ENCODE measurements at regions of chr22 and their contacts with region 1.

Region 1: GRCh38 chr22:43088979-43089717 is at the start of gene TTLL1:
- DNase-seq: peak; percentile 83
- ATAC-seq: peak; percentile 96
- H3K4me3 Mint-ChIP-seq: peak within 1 kb of the TSS; percentile 88
- H3K27ac Mint-ChIP-seq: peak within 1 kb of the TSS; percentile 56
- H3K4me1 Mint-ChIP-seq: peaks cover 21% of the 10 kb centered on the region
- H3K27me3 Mint-ChIP-seq: no peaks in the 10 kb centered on the region
- CTCF ChIP-seq: no peak
- total RNA-seq, gene TTLL1: 1.2 and 1.5 TPM in 2 replicates

Region 2: DNA sequence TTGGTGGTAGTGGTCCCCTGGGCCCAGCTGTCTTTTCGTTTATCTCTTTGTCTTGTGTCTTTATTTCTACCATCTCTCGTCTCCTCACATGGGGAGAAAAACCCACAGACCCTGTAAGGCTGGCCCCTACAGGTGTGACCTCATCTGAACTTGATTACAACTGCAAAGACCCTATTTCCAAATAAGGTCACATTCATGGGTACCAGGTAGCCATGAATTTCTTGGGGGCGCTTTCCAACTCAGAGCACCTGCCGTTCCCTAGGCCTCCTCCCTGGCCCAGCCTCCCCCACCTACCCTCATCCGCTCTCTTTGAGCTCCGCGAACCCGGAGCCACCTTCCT is 555.5 kb before region 1 on chr22:
- CTCF ChIA-PET with region 1: no interaction called
- POLR2A ChIA-PET with region 1: no interaction called
- intact Hi-C with region 1: loop called (anchors 5 kb)
- DNase-seq: no peak
- ATAC-seq: no peak
- H3K4me3 Mint-ChIP-seq: peak overlapping the region; percentile 81
- H3K27ac Mint-ChIP-seq: peak overlapping the region; percentile 94
- H3K4me1 Mint-ChIP-seq: peaks cover 66% of the 10 kb centered on the region
- H3K27me3 Mint-ChIP-seq: no peaks in the 10 kb centered on the region
- CTCF ChIP-seq: no peak

Region 3: GRCh38 chr22:42780070-42780540 is 309.0 kb before region 1 on chr22:
- CTCF ChIA-PET with region 1: no interaction called
- POLR2A ChIA-PET with region 1: interaction called, 4 read pairs
- intact Hi-C with region 1: loop called (anchors 1 kb)
- DNase-seq: no peak
- ATAC-seq: peak; percentile 80
- H3K4me3 Mint-ChIP-seq: no peak overlapping the region
- H3K27ac Mint-ChIP-seq: no peak overlapping the region
- H3K4me1 Mint-ChIP-seq: peaks cover 2% of the 10 kb centered on the region
- H3K27me3 Mint-ChIP-seq: no peaks in the 10 kb centered on the region
- CTCF ChIP-seq: peak; percentile 31

Region 4: DNA sequence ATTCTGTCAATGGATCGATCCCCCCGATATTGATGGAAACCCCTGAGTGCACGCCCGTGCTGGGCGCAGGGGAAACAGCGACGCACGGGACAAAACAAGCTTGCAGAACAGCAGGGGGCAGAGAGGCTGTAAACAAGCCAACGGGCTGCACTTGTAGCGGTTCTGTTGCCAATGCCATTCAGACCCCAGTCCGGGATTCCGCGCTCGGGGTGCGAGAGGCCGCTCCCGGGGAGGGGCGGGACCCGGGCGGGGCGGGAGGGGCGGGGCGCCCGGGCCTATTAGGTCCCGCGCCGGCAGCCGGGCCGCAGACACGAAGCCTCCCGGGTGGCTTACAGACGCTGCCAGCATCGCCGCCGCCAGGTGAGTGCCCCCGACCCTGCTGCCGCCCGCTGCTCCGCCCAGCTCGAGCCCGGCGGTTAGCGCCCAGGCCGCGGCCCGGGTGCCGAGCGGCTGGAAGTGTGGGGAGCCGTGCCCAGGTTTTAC is 21.3 kb after region 1 on chr22 and contains the start of gene BIK:
- CTCF ChIA-PET with region 1: no interaction called
- POLR2A ChIA-PET with region 1: interaction called, 3 read pairs
- intact Hi-C with region 1: loop called (anchors 2 kb)
- DNase-seq: peak; percentile 29
- ATAC-seq: peak; percentile 60
- H3K4me3 Mint-ChIP-seq: peak within 1 kb of the TSS; percentile 72
- H3K27ac Mint-ChIP-seq: no peak within 1 kb of the TSS
- H3K4me1 Mint-ChIP-seq: peaks cover 22% of the 10 kb centered on the region
- H3K27me3 Mint-ChIP-seq: peaks cover 29% of the 10 kb centered on the region
- CTCF ChIP-seq: no peak
- total RNA-seq, gene BIK: 2.6 TPM in 2 replicates

Region 5: DNA sequence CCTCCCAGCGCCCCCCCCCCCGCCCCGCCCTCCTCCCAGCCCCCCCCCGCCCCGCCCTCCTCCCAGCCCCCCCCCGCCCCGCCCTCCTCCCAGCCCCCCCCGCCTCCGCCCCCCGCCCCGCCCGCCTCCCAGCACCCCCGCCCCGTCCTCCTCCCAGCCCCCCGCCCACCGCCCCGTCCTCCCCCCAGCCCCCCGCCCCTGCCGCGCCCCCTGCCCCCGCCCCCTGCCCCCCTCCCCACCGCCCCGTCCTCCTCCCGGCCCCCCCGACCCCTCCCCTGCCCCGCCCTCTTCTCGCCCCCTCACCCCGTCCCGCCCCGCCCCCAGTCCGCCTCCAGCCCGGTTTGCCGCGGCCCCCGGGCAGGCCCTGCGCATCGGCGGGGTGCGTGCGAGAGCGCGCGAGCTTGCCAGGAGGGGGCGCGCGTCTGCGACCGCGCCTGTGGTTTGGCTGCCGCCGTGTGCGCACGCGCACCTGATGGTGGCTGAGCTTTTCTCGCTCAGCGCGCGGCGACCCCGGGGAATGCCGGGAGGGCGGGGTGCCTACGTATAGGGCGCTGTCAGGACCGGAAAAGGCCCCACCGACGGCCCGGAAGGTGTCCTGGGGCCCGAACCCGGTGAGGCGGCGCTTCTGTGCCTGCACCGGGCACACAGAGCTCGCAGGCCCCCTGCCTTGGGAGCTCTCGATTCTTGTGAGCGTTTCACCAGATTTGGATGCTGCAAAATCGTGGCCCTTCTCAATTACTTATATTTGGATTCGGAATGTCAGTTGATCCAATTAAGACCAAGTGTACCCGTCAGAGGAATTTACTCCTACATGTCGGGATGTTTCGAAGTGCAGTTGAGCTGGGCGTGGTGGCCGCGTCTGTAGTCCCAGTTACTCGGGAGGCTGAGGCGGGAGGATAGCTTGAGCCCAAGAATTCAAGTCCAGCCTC is 98.3 kb after region 1 on chr22:
- CTCF ChIA-PET with region 1: no interaction called
- POLR2A ChIA-PET with region 1: no interaction called
- intact Hi-C with region 1: loop called (anchors 1 kb)
- DNase-seq: peak; percentile 97
- ATAC-seq: peak; percentile 88
- H3K4me3 Mint-ChIP-seq: peak overlapping the region; percentile 81
- H3K27ac Mint-ChIP-seq: peak overlapping the region; percentile 92
- H3K4me1 Mint-ChIP-seq: peaks cover 14% of the 10 kb centered on the region
- H3K27me3 Mint-ChIP-seq: peaks cover 3% of the 10 kb centered on the region
- CTCF ChIP-seq: no peak